Activated CD4-positive, alpha-beta memory T cell treated with anti-CD3 and anti-CD28 coated beads for 36 hours (primary cell): ENCODE measurements at regions of chr19 and their contacts with region 1.

Region 1: DNA sequence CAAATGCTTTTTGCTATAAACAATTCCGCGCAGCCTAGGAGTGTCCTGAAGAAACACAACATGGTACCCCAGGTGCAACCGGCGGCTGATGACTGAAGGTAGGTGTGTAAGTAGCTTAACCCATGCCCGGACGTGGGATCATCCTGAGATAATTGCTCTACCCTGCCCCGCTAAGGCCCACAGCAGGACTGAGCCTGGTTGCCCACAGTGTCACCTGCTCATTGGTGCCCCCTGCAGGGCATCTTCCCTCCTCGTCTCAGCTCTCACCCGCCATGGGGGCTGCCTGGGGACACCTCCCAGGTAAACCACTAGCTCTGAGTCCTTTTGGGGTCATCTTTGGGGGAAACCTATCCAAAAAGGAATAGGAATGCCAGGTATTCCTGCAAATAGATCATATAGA is 22.3 kb downstream of the TMEM161A start:
- DNase-seq: peak; percentile 64
- H3K4me3 Mint-ChIP-seq: no peak overlapping the region
- H3K27ac Mint-ChIP-seq: no peak overlapping the region
- H3K4me1 Mint-ChIP-seq: no peaks in the 10 kb centered on the region
- H3K27me3 Mint-ChIP-seq: no peaks in the 10 kb centered on the region

Region 2: DNA sequence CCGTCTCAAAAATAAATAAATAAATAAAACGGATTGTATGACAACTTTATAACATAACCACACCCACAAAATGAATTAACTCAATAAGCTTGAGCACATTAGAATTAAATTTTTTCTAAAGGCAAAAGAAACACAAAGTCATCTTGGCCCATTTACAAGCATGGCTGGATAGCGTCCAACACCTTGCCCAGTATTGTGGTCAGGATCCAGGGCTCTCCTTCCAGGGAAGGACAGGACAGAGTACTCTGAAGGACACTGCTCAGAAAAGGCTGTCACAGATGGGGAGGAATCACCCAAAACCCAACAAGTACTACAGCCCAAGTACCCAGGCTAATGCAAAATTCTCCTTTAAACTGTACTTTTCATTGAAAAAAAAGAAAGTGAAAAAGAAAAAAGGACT is 109.7 kb before region 1 on chr19:
- CTCF ChIA-PET with region 1: no interaction called
- POLR2A ChIA-PET with region 1: no interaction called
- intact Hi-C with region 1: no loop called
- DNase-seq: no peak
- H3K4me3 Mint-ChIP-seq: no peak overlapping the region
- H3K27ac Mint-ChIP-seq: no peak overlapping the region
- H3K4me1 Mint-ChIP-seq: no peaks in the 10 kb centered on the region
- H3K27me3 Mint-ChIP-seq: no peaks in the 10 kb centered on the region

Region 3: DNA sequence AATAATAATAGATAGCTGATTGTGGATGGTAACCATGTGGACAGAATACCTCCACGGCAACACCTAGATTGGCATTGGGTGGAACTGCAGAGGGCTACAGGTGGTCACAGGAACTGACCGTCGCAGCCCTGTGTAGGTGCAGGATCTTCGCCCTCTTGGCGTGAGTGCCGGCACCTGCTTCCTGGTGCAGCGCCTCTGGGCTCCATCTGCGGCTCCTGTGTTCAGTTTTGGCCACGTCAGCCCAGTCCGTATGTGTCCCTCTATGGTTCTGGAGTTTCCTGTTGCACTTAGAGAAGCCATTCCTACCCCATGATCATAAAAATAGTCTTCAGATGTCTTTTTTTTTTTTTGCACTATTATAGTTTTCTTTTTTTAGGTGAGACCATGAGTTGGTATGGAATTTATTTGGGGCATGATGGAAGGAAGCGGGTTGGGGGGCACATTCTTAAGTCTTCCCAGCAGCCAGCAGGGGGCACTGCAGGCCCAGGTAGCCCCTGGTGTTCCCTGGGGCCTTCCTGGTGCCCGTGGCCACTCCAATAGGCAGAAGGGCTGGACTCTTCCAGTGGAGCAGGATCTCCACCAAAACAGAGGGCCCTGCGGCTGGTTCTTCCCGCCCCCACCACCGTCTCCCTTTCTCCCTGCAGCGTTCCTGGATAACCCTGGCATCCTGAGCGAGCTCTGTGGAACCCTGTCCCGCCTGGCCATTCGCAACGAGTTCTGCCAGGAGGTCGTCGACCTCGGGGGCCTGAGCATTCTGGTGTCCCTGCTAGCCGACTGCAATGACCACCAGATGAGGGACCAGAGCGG is 62.2 kb before region 1 on chr19:
- CTCF ChIA-PET with region 1: interaction called, 12 read pairs
- POLR2A ChIA-PET with region 1: no interaction called
- intact Hi-C with region 1: no loop called
- DNase-seq: peak; percentile 58
- H3K4me3 Mint-ChIP-seq: no peak overlapping the region
- H3K27ac Mint-ChIP-seq: no peak overlapping the region
- H3K4me1 Mint-ChIP-seq: no peaks in the 10 kb centered on the region
- H3K27me3 Mint-ChIP-seq: no peaks in the 10 kb centered on the region

Region 4: GRCh38 chr19:19068659-19069654 is 47.0 kb before region 1 on chr19:
- CTCF ChIA-PET with region 1: interaction called, 11 read pairs
- POLR2A ChIA-PET with region 1: no interaction called
- intact Hi-C with region 1: no loop called
- DNase-seq: no peak
- H3K4me3 Mint-ChIP-seq: no peak overlapping the region
- H3K27ac Mint-ChIP-seq: no peak overlapping the region
- H3K4me1 Mint-ChIP-seq: peaks cover 33% of the 10 kb centered on the region
- H3K27me3 Mint-ChIP-seq: no peaks in the 10 kb centered on the region